CD8-positive, alpha-beta T cell (primary cell): ENCODE measurements at regions of chr11 and their contacts with region 1.

Region 1: DNA sequence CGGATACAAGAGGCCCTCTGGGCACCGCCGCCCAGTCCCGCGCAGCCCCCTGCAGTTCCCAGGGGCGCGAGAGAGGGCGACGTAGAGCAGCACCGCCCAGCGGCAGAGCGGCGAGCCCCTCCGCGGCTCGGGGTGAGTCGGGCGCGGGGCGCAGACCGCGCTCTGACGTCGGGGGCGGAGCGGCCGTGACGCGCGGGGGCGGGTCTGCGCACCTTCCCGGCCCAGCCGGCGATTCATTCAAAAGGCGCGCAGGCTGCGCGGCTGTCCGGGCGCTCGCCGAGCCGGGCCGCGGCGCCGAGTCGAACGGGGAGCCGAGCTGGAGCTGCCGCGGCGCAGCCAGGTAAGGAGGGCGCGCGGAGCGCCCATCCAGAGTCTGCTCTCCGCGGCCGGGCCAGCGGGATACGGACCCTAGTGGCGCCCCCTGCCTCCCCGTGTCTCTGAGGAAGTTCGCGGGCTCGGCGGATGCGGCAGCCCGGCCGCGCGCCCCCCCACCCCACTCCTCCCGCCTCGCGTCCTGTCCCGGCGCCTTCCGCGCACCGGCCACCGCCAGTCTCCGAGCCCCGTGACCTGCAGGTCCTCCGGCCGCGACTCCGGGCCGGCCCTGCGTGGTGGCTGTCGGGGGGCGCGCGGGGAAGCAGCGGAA is at the start of gene RELT:
- DNase-seq: peak; percentile 88 to 96 (median 92)
- ATAC-seq: peak; percentile 95
- H3K4me3 ChIP-seq: peak within 1 kb of the TSS; percentile 74 to 86
- H3K4me3 Mint-ChIP-seq: peak within 1 kb of the TSS; percentile 96
- H3K27ac ChIP-seq: peak within 1 kb of the TSS; percentile 82 to 83
- H3K27ac Mint-ChIP-seq: peak within 1 kb of the TSS; percentile 96
- H3K4me1 ChIP-seq: peaks cover 23% of the 10 kb centered on the region
- H3K4me1 Mint-ChIP-seq: peaks cover 43% of the 10 kb centered on the region
- H3K27me3 ChIP-seq: no peaks in the 10 kb centered on the region
- H3K27me3 Mint-ChIP-seq: no peaks in the 10 kb centered on the region
- CTCF ChIP-seq: peak; percentile 95
- total RNA-seq, gene RELT: 144 to 158 TPM

Region 2: DNA sequence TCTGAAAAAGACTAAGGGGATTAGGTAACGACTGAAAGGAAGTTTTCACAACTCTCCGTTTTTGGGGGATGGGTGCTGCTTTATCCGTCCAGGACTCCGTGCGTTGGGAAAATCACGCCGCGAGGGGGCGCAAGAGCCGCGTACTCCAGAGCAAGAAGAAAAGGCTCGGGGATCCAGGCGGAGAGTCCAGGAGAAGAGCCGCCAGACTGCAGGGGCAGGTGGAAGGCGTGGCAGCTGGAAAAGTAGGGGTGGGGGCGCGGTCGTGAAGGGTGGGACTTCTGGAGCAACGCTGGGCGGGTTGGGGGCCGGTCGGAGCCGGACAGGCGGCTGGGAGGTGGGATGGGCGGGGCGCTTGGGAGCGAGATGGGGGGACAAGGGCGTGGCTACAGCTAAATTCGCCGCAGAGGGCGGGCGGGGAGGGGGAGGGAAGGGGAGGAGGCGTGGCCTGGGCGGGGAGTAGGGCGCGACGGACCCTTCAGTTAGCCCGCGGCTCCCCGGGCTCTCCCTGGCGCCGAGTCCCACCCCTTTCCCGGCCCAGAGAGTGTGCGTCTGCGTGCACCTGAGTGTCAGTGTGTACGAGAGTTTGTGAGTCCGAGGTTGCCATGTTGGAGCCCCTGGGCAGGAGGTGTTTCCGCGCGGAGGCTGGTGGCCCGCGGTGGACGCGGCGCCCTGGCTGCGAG is 68.8 kb before region 1 on chr11:
- CTCF ChIA-PET with region 1: interaction called, 4 read pairs
- POLR2A ChIA-PET with region 1: interaction called, 3 read pairs
- intact Hi-C with region 1: loop called (anchors 1 to 5 kb)
- DNase-seq: peak; percentile 77 to 94 (median 89)
- ATAC-seq: peak; percentile 71
- H3K4me3 ChIP-seq: peak overlapping the region; percentile 62 to 77
- H3K4me3 Mint-ChIP-seq: peak overlapping the region; percentile 86
- H3K27ac ChIP-seq: no peak overlapping the region
- H3K27ac Mint-ChIP-seq: no peak overlapping the region
- H3K4me1 ChIP-seq: peaks cover 9% of the 10 kb centered on the region
- H3K4me1 Mint-ChIP-seq: peaks cover 10% of the 10 kb centered on the region
- H3K27me3 ChIP-seq: peaks cover 11 to 12% of the 10 kb centered on the region in 2 experiments
- H3K27me3 Mint-ChIP-seq: peaks cover 15% of the 10 kb centered on the region
- CTCF ChIP-seq: peak; percentile 46

Region 3: GRCh38 chr11:73366265-73366610 is 10.0 kb before region 1 on chr11:
- CTCF ChIA-PET with region 1: interaction called, 8 read pairs
- POLR2A ChIA-PET with region 1: interaction called, 6 read pairs
- intact Hi-C with region 1: loop called (anchors 1 kb)
- DNase-seq: peak in 6 of 9 experiments; percentile 23 to 81 (median 58)
- ATAC-seq: peak; percentile 92
- H3K4me3 ChIP-seq: peak overlapping the region; percentile 18 to 27
- H3K4me3 Mint-ChIP-seq: peak overlapping the region; percentile 68
- H3K27ac ChIP-seq: peak overlapping the region; percentile 65 to 86
- H3K27ac Mint-ChIP-seq: peak overlapping the region; percentile 94
- H3K4me1 ChIP-seq: peaks cover 29% of the 10 kb centered on the region
- H3K4me1 Mint-ChIP-seq: peaks cover 35% of the 10 kb centered on the region
- H3K27me3 ChIP-seq: no peaks in the 10 kb centered on the region
- H3K27me3 Mint-ChIP-seq: no peaks in the 10 kb centered on the region
- CTCF ChIP-seq: no peak

Region 4: GRCh38 chr11:73554671-73555320 is 178.5 kb after region 1 on chr11:
- CTCF ChIA-PET with region 1: no interaction called
- POLR2A ChIA-PET with region 1: no interaction called
- intact Hi-C with region 1: no loop called
- DNase-seq: no peak
- ATAC-seq: no peak
- H3K4me3 ChIP-seq: no peak overlapping the region
- H3K4me3 Mint-ChIP-seq: no peak overlapping the region
- H3K27ac ChIP-seq: no peak overlapping the region
- H3K27ac Mint-ChIP-seq: no peak overlapping the region
- H3K4me1 ChIP-seq: peaks cover 10% of the 10 kb centered on the region
- H3K4me1 Mint-ChIP-seq: peaks cover 26% of the 10 kb centered on the region
- H3K27me3 ChIP-seq: no peaks in the 10 kb centered on the region
- H3K27me3 Mint-ChIP-seq: no peaks in the 10 kb centered on the region
- CTCF ChIP-seq: no peak

Region 5: DNA sequence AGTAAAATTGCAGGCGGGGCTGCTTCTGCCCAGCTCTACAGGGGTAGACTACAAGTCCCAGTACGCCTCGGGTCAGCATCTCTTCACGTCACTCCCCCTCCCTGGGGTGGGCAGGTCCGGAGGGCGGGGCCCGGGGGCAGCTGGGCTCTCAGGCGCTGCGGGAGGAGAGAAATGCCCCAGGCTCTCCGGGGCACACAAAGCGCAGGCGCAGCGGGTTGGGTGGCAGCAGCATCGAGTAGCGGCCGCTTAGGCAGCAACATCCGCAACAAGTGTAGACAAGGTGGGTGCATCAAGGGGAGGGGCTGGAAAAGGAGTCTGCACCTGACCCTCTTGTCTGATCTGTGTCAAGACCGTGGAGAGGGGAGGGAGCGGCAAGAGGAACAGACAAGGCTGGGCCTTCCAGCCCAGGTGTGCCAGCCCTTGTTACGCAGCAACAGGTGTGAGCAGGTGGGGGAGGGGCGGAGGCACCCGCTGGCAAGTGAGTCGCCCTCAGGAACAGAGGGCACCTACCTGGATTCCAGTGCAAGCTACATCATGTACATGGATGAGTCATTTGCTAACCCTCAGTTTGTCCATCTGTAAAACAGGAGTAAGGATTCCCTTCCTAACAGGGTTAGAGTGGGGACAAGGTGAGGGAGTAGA is 271.3 kb after region 1 on chr11:
- CTCF ChIA-PET with region 1: no interaction called
- POLR2A ChIA-PET with region 1: no interaction called
- intact Hi-C with region 1: loop called in 1 of 2 experiments (anchors 5 kb)
- DNase-seq: peak; percentile 89 to 97 (median 94)
- ATAC-seq: peak; percentile 99
- H3K4me3 ChIP-seq: peak overlapping the region; percentile 55 to 79
- H3K4me3 Mint-ChIP-seq: peak overlapping the region; percentile 90
- H3K27ac ChIP-seq: peak overlapping the region; percentile 42 to 58
- H3K27ac Mint-ChIP-seq: peak overlapping the region; percentile 94
- H3K4me1 ChIP-seq: peaks cover 19% of the 10 kb centered on the region
- H3K4me1 Mint-ChIP-seq: peaks cover 24% of the 10 kb centered on the region
- H3K27me3 ChIP-seq: peaks cover 0 to 4% of the 10 kb centered on the region in 2 experiments
- H3K27me3 Mint-ChIP-seq: no peaks in the 10 kb centered on the region
- CTCF ChIP-seq: no peak

Region 6: GRCh38 chr11:73787643-73788537 is 411.6 kb after region 1 on chr11 and contains the start of gene MRPL48:
- CTCF ChIA-PET with region 1: no interaction called
- POLR2A ChIA-PET with region 1: no interaction called
- intact Hi-C with region 1: loop called in 1 of 2 experiments (anchors 10 kb)
- DNase-seq: peak; percentile 75 to 93 (median 88)
- ATAC-seq: peak; percentile 100
- H3K4me3 ChIP-seq: peak within 1 kb of the TSS; percentile 87 to 89
- H3K4me3 Mint-ChIP-seq: peak within 1 kb of the TSS; percentile 100
- H3K27ac ChIP-seq: peak within 1 kb of the TSS; percentile 77 to 82
- H3K27ac Mint-ChIP-seq: peak within 1 kb of the TSS; percentile 99
- H3K4me1 ChIP-seq: peaks cover 4% of the 10 kb centered on the region
- H3K4me1 Mint-ChIP-seq: peaks cover 33% of the 10 kb centered on the region
- H3K27me3 ChIP-seq: no peaks in the 10 kb centered on the region
- H3K27me3 Mint-ChIP-seq: no peaks in the 10 kb centered on the region
- CTCF ChIP-seq: no peak
- total RNA-seq, gene MRPL48: 10.2 to 13.7 TPM